ENCODE measurements at regions of chrX and their contacts with region 1.

Region 1: DNA sequence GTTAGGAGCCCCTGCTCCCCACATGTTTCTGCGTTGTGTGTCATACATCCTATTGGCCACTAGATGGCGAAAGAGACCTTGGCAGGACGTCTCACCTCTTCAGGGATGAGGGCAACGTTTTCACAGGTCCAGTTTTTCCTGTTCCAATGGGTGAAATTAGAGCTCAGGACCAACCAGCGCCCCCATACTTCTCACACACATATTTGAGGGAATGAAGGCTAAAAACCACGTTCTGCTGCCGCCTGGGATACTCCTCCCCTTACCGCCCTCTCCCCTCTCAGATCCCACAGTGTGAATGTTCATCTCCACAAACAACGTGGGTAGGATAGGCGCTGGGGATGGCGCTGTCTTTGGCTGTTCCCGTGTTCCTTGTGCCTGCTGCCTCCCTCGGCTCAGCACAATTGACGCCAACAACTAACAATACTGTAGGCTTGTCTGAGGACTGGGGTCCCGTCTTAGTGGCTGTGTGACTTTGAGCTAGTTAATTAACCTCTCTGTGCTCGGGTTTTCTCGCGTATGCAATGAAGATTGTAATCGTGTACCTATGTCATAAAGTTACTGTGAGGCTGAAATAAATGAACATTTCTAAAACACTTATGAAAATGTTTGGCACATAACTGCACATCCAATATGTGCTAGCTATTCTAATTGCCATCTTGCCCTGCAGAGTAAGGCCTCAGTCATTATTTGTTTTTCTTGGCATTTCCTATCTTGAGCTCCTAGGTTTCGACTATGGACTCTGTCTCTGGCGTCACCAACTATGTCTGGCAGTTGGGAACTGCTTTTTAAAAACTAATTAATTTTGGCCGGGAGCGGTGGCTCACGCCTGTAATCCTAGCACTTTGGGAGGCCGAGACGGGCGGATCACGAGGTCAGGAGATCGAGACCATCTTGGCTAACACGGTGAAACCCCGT is 181.3 kb upstream of the STK26 start:
- DNase-seq: peak; percentile 27
- H3K4me3 Mint-ChIP-seq: no peak overlapping the region
- H3K27ac Mint-ChIP-seq: no peak overlapping the region
- H3K4me1 Mint-ChIP-seq: no peaks in the 10 kb centered on the region
- H3K27me3 Mint-ChIP-seq: no peaks in the 10 kb centered on the region

Region 2: DNA sequence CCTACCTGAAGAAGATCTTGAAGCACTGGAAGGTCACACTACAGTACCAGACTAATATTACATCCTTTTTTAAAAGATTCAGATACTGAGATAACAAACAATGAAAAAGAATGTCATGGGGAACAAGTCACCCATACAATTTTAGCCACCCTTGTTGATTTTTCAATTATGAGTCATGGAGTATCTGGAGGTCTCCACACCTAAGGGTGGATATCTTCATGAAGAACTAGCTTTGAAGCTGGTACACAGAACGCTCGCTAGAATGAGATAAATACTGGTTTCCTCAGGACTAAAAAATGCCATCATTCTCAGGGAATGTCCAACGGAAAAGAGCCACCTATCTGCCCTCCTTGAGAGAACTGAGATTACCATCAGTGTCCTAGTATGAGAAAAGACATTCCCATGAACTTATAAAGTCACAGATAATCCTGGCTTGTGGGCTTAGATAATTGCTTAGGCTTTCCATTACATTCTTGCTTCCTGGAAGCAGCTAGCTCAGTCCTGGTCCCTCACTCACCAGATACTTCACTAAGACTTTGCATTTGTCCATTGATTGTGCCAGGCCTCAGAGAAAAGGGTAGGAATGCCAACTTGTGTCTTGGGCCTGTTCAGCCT is 131.2 kb before region 1 on chrX:
- CTCF ChIA-PET with region 1: no interaction called
- POLR2A ChIA-PET with region 1: no interaction called
- intact Hi-C with region 1: no loop called
- DNase-seq: no peak
- H3K4me3 Mint-ChIP-seq: no peak overlapping the region
- H3K27ac Mint-ChIP-seq: no peak overlapping the region
- H3K4me1 Mint-ChIP-seq: no peaks in the 10 kb centered on the region
- H3K27me3 Mint-ChIP-seq: no peaks in the 10 kb centered on the region

Region 3: GRCh38 chrX:131746474-131746968 is 95.2 kb before region 1 on chrX:
- CTCF ChIA-PET with region 1: no interaction called
- POLR2A ChIA-PET with region 1: no interaction called
- intact Hi-C with region 1: no loop called
- DNase-seq: no peak
- H3K4me3 Mint-ChIP-seq: no peak overlapping the region
- H3K27ac Mint-ChIP-seq: no peak overlapping the region
- H3K4me1 Mint-ChIP-seq: no peaks in the 10 kb centered on the region
- H3K27me3 Mint-ChIP-seq: no peaks in the 10 kb centered on the region

Region 4: DNA sequence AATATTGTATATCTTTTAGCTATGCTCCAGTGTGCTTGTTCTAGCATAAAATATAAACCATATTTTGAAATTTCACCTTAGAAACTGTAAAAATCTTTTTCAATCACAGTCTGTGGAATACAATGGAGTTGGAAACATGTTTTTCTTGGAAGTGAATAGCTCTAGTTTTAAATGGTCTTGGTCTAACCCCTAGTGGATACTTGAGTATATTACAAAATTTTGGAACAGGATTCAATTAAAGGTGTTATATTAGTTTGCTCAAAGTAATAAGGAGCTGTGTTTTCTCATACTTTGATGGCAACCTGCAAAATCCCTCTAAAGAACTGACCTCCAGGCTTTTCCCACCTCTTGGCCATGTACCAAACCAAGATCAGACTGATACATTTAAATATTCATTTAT is 229.5 kb after region 1 on chrX:
- CTCF ChIA-PET with region 1: interaction called, 12 read pairs
- POLR2A ChIA-PET with region 1: no interaction called
- intact Hi-C with region 1: no loop called
- DNase-seq: no peak
- H3K4me3 Mint-ChIP-seq: no peak overlapping the region
- H3K27ac Mint-ChIP-seq: no peak overlapping the region
- H3K4me1 Mint-ChIP-seq: no peaks in the 10 kb centered on the region
- H3K27me3 Mint-ChIP-seq: no peaks in the 10 kb centered on the region

Region 5: GRCh38 chrX:132615391-132616131 is 773.8 kb after region 1 on chrX:
- CTCF ChIA-PET with region 1: interaction called, 4 read pairs
- POLR2A ChIA-PET with region 1: no interaction called
- intact Hi-C with region 1: loop called (anchors 5 kb)
- DNase-seq: peak; percentile 57
- H3K4me3 Mint-ChIP-seq: no peak overlapping the region
- H3K27ac Mint-ChIP-seq: no peak overlapping the region
- H3K4me1 Mint-ChIP-seq: no peaks in the 10 kb centered on the region
- H3K27me3 Mint-ChIP-seq: no peaks in the 10 kb centered on the region

Measured in activated CD4-positive, alpha-beta memory T cell treated with anti-CD3 and anti-CD28 coated beads for 36 hours (primary cell).